ENCODE measurements at regions of chr17 and their contacts with region 1.

Region 1: DNA sequence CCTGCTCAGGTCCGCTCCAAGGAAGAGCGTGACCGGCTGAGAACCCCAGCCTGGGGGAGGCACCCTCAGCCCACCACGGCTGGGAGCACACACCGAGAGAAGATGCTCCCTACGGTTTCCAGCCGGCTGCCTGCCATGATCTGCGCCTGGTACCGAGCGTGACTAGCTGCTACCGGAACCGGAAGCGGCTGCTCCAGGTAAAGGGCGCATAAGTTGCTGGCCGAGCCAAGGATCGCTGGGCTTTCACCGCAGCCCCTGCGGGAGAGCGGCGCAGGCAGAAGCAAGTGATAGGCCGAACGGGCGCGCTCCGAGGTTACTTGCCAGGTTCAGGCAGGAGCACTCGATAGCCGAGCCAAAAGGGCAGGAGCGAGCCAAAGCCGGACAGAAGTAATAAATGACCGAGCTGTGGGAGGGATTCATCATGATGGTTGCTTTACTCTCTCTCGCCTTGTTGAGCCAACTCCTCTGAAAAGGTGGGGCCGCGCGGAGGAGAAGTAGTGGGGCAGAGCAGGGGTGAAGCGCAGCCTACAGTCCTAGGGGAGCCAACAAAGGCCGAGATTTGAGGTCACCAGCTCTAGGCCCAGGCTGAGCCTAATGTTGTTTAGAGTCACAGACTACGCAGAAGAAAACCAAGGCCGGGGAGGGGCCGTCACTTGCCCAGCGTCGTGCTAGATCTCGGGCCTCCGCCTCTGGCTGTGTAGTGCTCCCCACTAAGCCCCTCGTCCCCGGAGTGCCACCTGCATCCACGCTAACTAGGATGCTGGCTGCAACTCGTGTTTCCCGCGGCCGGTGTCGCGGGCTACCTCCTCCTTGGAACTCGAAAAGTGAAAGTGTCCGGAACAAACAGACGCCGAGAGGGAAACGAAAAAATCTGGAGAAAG is at the start of gene MRPS23:
- DNase-seq: peak; percentile 100
- H3K4me3 ChIP-seq: peak within 1 kb of the TSS; percentile 63 to 97 (median 85)
- H3K27ac ChIP-seq: peak within 1 kb of the TSS; percentile 88 to 97 (median 94)
- H3K4me1 ChIP-seq: peaks cover 0 to 65% (median 55%) of the 10 kb centered on the region in 4 donors
- H3K27me3 ChIP-seq: no peaks in the 10 kb centered on the region
- CTCF ChIP-seq: no peak
- EP300 ChIP-seq: peak in 1 of 4 donors; percentile 79
- POLR2A ChIP-seq: peak; percentile 91 to 93
- total RNA-seq, gene MRPS23: 9.5 to 15.1 (median 13.3) TPM

Region 2: GRCh38 chr17:56977673-56978395 is 872.3 kb before region 1 on chr17 and contains the start of gene SCPEP1:
- intact Hi-C with region 1: loop called (anchors 5 kb)
- DNase-seq: peak; percentile 94
- H3K4me3 ChIP-seq: peak within 1 kb of the TSS; percentile 50 to 61 (median 59)
- H3K27ac ChIP-seq: peak within 1 kb of the TSS; percentile 70 to 83 (median 78)
- H3K4me1 ChIP-seq: peaks cover 0 to 23% (median 19%) of the 10 kb centered on the region in 4 donors
- H3K27me3 ChIP-seq: no peaks in the 10 kb centered on the region
- CTCF ChIP-seq: no peak
- EP300 ChIP-seq: no peak
- POLR2A ChIP-seq: peak; percentile 42 to 45
- total RNA-seq, gene SCPEP1: 77.8 to 141 (median 85.6) TPM

Region 3: GRCh38 chr17:57385975-57386374 is 464.1 kb before region 1 on chr17:
- intact Hi-C with region 1: no loop called
- DNase-seq: no peak
- H3K4me3 ChIP-seq: no peak overlapping the region
- H3K27ac ChIP-seq: no peak overlapping the region
- H3K4me1 ChIP-seq: peaks cover 0 to 9% (median 7%) of the 10 kb centered on the region in 4 donors
- H3K27me3 ChIP-seq: no peaks in the 10 kb centered on the region
- CTCF ChIP-seq: no peak
- EP300 ChIP-seq: no peak
- POLR2A ChIP-seq: no peak

Region 4: GRCh38 chr17:57557834-57558681 is 292.1 kb before region 1 on chr17:
- intact Hi-C with region 1: no loop called
- DNase-seq: no peak
- H3K4me3 ChIP-seq: no peak overlapping the region
- H3K27ac ChIP-seq: no peak overlapping the region
- H3K4me1 ChIP-seq: peaks cover 0 to 28% (median 22%) of the 10 kb centered on the region in 4 donors
- H3K27me3 ChIP-seq: no peaks in the 10 kb centered on the region
- CTCF ChIP-seq: no peak
- EP300 ChIP-seq: no peak
- POLR2A ChIP-seq: no peak

Region 5: DNA sequence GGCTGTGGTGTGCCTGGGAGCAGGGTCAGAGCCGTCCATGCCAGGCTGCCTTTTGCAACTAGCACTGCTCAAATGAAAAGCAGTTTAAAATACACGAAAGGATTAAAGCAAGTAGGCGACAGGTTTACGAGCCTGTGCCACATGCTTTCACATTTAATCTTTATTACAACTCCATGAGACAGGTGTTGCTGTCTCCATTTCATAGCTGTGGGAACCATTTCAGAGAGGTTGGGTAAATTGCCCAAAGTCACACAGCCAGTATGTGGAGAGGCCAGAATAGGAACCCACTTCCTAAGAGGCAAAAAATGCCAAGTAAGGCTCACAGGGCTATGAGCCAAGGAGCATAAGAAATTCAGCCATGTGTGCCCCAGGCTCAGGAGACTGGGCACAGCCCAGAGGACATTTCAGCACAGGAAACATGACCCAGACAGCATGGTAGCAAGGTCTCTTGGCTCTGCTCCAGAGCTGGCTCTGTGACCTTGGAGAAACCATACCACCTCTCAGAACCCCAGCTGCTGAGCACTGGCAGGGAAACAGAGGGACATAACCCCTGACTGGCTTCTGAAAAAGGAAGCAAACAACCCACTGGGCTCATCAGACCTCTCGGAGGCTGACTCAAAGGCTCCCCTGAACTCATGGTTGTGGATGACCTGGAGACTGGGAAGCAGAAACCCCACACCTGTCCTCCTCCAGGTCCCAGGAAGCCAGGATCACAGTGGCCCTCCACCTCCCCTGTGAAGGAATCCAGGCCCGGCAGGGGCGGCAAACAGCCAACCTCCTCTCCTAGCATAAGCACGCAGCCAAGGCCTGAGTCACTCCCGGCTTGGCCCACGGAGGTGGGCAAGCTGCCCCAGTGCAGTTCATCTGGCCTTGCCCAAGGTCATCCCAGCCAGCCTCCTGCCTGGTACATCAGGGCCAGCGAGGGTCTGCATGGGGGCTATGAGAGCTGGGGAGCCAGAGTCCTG is 40.1 kb after region 1 on chr17:
- intact Hi-C with region 1: no loop called
- DNase-seq: peak; percentile 97
- H3K4me3 ChIP-seq: no peak overlapping the region
- H3K27ac ChIP-seq: peak overlapping the region; percentile 97 to 100 (median 98)
- H3K4me1 ChIP-seq: peaks cover 0 to 83% (median 79%) of the 10 kb centered on the region in 4 donors
- H3K27me3 ChIP-seq: no peaks in the 10 kb centered on the region
- CTCF ChIP-seq: no peak
- EP300 ChIP-seq: peak in 3 of 4 donors; percentile 49 to 78 (median 51)
- POLR2A ChIP-seq: no peak

Measured in sigmoid colon (tissue), 7 donors.